A673 (cell line): ENCODE measurements at regions of chr6 and their contacts with region 1.

Region 1: GRCh38 chr6:19898141-19898735 is 61.1 kb downstream of the ID4 start:
- DNase-seq: no peak
- H3K4me3 ChIP-seq: no peak overlapping the region
- H3K27ac ChIP-seq: no peak overlapping the region
- H3K4me1 ChIP-seq: no peaks in the 10 kb centered on the region
- H3K27me3 ChIP-seq: no peaks in the 10 kb centered on the region
- CTCF ChIP-seq: no peak

Region 2: DNA sequence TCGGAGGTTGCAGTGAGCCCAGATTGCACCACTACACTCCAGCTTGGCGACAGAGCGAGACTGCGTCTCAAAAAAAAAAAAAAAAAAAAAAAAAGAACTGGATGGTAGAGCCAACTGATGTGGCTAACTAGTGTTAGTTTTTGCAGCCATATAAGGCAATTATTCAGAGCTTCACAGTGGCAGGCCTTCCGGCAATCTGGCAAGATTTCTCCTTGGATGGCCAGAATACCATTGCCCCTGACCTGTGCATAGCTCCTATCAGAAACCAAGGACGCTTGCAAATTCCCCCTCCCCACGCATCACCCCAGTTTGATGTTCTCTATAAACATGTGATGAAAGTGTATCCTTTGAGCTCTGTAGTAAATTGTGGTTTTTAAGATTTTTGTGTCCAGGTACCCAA is 1384.1 kb before region 1 on chr6:
- CTCF ChIA-PET with region 1: no interaction called
- POLR2A ChIA-PET with region 1: interaction called, 20 read pairs
- intact Hi-C with region 1: no loop called
- DNase-seq: no peak
- H3K4me3 ChIP-seq: no peak overlapping the region
- H3K27ac ChIP-seq: no peak overlapping the region
- H3K4me1 ChIP-seq: peaks cover 20% of the 10 kb centered on the region
- H3K27me3 ChIP-seq: no peaks in the 10 kb centered on the region
- CTCF ChIP-seq: no peak

Region 3: GRCh38 chr6:20085817-20086216 is 187.6 kb after region 1 on chr6:
- CTCF ChIA-PET with region 1: no interaction called
- POLR2A ChIA-PET with region 1: no interaction called
- intact Hi-C with region 1: no loop called
- DNase-seq: no peak
- H3K4me3 ChIP-seq: no peak overlapping the region
- H3K27ac ChIP-seq: no peak overlapping the region
- H3K4me1 ChIP-seq: no peaks in the 10 kb centered on the region
- H3K27me3 ChIP-seq: no peaks in the 10 kb centered on the region
- CTCF ChIP-seq: no peak